K562 (cell line): ENCODE measurements at regions of chr2 and their contacts with region 1.

Region 1: GRCh38 chr2:151817929-151818328 is 10.3 kb downstream of the ARL5A start:
- DNase-seq: no peak
- ATAC-seq: no peak
- H3K4me3 ChIP-seq: no peak overlapping the region
- H3K27ac ChIP-seq: no peak overlapping the region
- H3K4me1 ChIP-seq: peaks cover 8 to 21% of the 10 kb centered on the region in 2 experiments; a peak in 3 of 5 replicates
- H3K27me3 ChIP-seq: no peaks in the 10 kb centered on the region
- CTCF ChIP-seq: no peak
- EP300 ChIP-seq: no peak
- POLR2A ChIP-seq: no peak
- RAD21 ChIP-seq: no peak

Region 2: DNA sequence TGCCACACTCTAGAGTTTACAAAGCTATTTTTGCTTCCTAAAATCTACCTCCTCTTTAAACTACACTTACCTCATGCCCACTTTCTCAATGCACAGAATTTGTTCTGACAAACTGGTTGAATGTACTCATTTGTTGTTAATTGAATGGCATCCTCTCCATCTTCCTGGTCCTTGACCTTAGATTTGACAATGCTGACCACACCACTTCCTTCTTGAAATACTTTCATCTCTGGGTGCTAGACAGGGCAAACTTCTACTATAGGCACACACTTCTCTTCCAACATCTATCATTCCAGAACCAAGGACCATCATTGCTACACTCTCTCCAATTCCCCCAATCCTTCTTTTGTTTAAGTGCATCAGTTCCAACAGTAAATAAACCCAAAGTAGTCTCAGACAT is 12.0 kb before region 1 on chr2:
- CTCF ChIA-PET with region 1: no interaction called
- POLR2A ChIA-PET with region 1: interaction called, 10 read pairs
- in situ Hi-C with region 1: no loop called
- intact Hi-C with region 1: no loop called
- DNase-seq: no peak
- ATAC-seq: no peak; the same call in 2 of the 3 replicates
- H3K4me3 ChIP-seq: no peak overlapping the region
- H3K27ac ChIP-seq: no peak overlapping the region
- H3K4me1 ChIP-seq: peaks cover 3% of the 10 kb centered on the region in 2 experiments; a peak in 3 of 5 replicates
- H3K27me3 ChIP-seq: no peaks in the 10 kb centered on the region
- CTCF ChIP-seq: no peak
- EP300 ChIP-seq: no peak
- POLR2A ChIP-seq: no peak
- RAD21 ChIP-seq: no peak

Region 3: GRCh38 chr2:151828143-151828889 is 10.4 kb after region 1 on chr2 and contains the start of gene ARL5A:
- CTCF ChIA-PET with region 1: no interaction called
- POLR2A ChIA-PET with region 1: interaction called, 34 read pairs
- in situ Hi-C with region 1: no loop called
- intact Hi-C with region 1: no loop called
- DNase-seq: peak; percentile 98 to 99 (median 98)
- ATAC-seq: peak; percentile 93
- H3K4me3 ChIP-seq: peak within 1 kb of the TSS; percentile 78
- H3K27ac ChIP-seq: peak within 1 kb of the TSS; percentile 75
- H3K4me1 ChIP-seq: peaks cover 11 to 36% of the 10 kb centered on the region in 2 experiments
- H3K27me3 ChIP-seq: no peaks in the 10 kb centered on the region
- CTCF ChIP-seq: peak in 1 of 3 experiments; percentile 19; a peak in 1 of 6 replicates
- EP300 ChIP-seq: no peak; the same call in 1 of the 2 replicates
- POLR2A ChIP-seq: peak; percentile 98
- RAD21 ChIP-seq: 0 out of 4 replicates have a peak, but pooled peaks have one; percentile 1 to 4
- polyA plus RNA-seq, gene ARL5A: 16.3 to 16.9 TPM

Region 4: GRCh38 chr2:151878655-151879563 is 61.0 kb after region 1 on chr2:
- CTCF ChIA-PET with region 1: no interaction called
- POLR2A ChIA-PET with region 1: no interaction called
- in situ Hi-C with region 1: no loop called
- intact Hi-C with region 1: no loop called
- DNase-seq: peak in 1 of 4 experiments; percentile 8
- ATAC-seq: no peak
- H3K4me3 ChIP-seq: no peak overlapping the region
- H3K27ac ChIP-seq: no peak overlapping the region
- H3K4me1 ChIP-seq: no peaks in the 10 kb centered on the region; a peak in 1 of 5 replicates
- H3K27me3 ChIP-seq: peaks cover 9 to 17% of the 10 kb centered on the region in 2 experiments
- CTCF ChIP-seq: no peak
- EP300 ChIP-seq: no peak
- POLR2A ChIP-seq: no peak
- RAD21 ChIP-seq: 0 out of 4 replicates have a peak, but pooled peaks of 1 of the 2 experiments have one; percentile 16